Caco-2 (cell line): ENCODE measurements at regions of chr1 and their contacts with region 1.

Region 1: DNA sequence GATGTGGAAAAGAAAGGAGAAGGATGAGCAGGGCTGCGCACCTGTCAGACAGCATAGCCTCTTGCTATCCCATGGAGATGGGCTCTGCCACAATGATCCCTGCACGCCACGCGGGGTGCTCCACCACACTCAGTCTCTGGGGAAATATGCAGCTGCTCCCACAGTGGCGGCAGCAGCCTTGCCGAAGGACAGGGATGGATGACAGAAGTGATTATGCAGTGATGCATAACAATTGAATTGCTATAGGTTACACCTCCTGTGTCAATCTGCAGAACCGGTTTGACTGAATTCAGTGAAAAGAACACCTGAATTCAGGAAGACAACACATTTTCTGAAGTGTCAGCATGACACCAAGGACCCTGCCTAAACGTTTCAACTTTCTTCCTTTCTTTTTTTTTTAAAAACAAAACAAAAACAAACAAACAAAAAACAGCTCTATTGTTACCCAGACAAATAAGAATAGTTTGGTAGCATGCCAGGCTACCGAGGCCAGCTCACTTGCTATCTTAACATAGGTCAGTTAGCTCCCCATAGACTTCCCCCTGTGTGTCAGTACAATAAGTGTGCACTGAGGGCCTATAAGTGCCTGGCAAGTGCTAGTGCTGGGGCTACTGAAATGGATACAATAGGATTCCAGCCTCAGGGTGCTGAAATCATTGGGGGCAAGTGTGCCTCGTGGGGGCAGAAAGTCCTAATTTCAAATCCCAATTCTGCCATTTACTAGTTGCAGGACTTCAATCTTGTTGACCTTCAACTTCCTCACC is 127.6 kb upstream of the LMO4 start:
- DNase-seq: peak in 1 of 2 experiments; percentile 10
- H3K4me3 ChIP-seq: no peak overlapping the region
- H3K4me3 Mint-ChIP-seq: no peak overlapping the region
- H3K27ac Mint-ChIP-seq: no peak overlapping the region
- H3K4me1 ChIP-seq: no peaks in the 10 kb centered on the region
- H3K4me1 Mint-ChIP-seq: peaks cover 6% of the 10 kb centered on the region
- H3K27me3 ChIP-seq: no peaks in the 10 kb centered on the region
- H3K27me3 Mint-ChIP-seq: peaks cover 15% of the 10 kb centered on the region
- CTCF ChIP-seq: no peak

Region 2: DNA sequence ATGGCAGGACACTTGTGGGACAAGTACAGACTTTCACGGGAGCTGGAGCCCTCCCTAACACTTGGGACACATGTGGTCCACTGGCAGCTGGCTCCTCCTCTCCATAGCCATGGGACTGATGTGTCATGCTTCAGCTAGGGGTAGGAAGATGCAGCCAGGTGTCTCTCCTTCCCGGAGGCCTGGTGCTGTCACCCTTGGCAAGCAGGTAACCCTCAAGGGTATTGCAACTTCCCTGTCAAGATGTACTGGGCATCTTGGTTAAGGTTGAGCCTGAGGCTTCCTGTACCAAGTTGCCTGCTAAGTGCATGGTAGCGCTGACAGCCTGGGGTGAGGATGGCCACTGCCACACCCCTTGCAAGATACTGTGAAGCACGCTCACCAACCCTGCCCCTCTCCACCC is 61.9 kb before region 1 on chr1:
- CTCF ChIA-PET with region 1: no interaction called
- POLR2A ChIA-PET with region 1: no interaction called
- intact Hi-C with region 1: loop called (anchors 2 kb)
- DNase-seq: no peak
- H3K4me3 ChIP-seq: no peak overlapping the region
- H3K4me3 Mint-ChIP-seq: no peak overlapping the region
- H3K27ac Mint-ChIP-seq: no peak overlapping the region
- H3K4me1 ChIP-seq: no peaks in the 10 kb centered on the region
- H3K4me1 Mint-ChIP-seq: no peaks in the 10 kb centered on the region
- H3K27me3 ChIP-seq: no peaks in the 10 kb centered on the region
- H3K27me3 Mint-ChIP-seq: no peaks in the 10 kb centered on the region
- CTCF ChIP-seq: no peak